CD8-positive, alpha-beta T cell (primary cell): ENCODE measurements at regions of chr16 and their contacts with region 1.

Region 1: GRCh38 chr16:30609926-30610839 is at the start of gene ZNF689:
- DNase-seq: peak; percentile 90 to 98 (median 94)
- ATAC-seq: peak; percentile 88
- H3K4me3 ChIP-seq: peak within 1 kb of the TSS; percentile 69 to 93
- H3K4me3 Mint-ChIP-seq: peak within 1 kb of the TSS; percentile 95
- H3K27ac ChIP-seq: peak within 1 kb of the TSS; percentile 91 to 93
- H3K27ac Mint-ChIP-seq: peak within 1 kb of the TSS; percentile 98
- H3K4me1 ChIP-seq: peaks cover 12% of the 10 kb centered on the region
- H3K4me1 Mint-ChIP-seq: peaks cover 24% of the 10 kb centered on the region
- H3K27me3 ChIP-seq: peaks cover 0 to 2% of the 10 kb centered on the region in 2 experiments
- H3K27me3 Mint-ChIP-seq: no peaks in the 10 kb centered on the region
- CTCF ChIP-seq: no peak
- total RNA-seq, gene ZNF689: 15.6 to 17.5 TPM

Region 2: GRCh38 chr16:30526823-30527635 is 83.2 kb before region 1 on chr16:
- CTCF ChIA-PET with region 1: no interaction called
- POLR2A ChIA-PET with region 1: no interaction called
- intact Hi-C with region 1: loop called in 1 of 2 experiments (anchors 2 kb)
- DNase-seq: peak; percentile 53 to 92 (median 86)
- ATAC-seq: peak; percentile 75
- H3K4me3 ChIP-seq: peak overlapping the region; percentile 74 to 75
- H3K4me3 Mint-ChIP-seq: peak overlapping the region; percentile 87
- H3K27ac ChIP-seq: peak overlapping the region; percentile 59 to 69
- H3K27ac Mint-ChIP-seq: peak overlapping the region; percentile 90
- H3K4me1 ChIP-seq: peaks cover 12% of the 10 kb centered on the region
- H3K4me1 Mint-ChIP-seq: peaks cover 24% of the 10 kb centered on the region
- H3K27me3 ChIP-seq: no peaks in the 10 kb centered on the region
- H3K27me3 Mint-ChIP-seq: no peaks in the 10 kb centered on the region
- CTCF ChIP-seq: no peak

Region 3: GRCh38 chr16:30585400-30586189 is 24.6 kb before region 1 on chr16 and contains the start of gene ZNF785:
- CTCF ChIA-PET with region 1: interaction called, 3 read pairs
- POLR2A ChIA-PET with region 1: interaction called, 5 read pairs
- intact Hi-C with region 1: loop called (anchors 1 kb)
- DNase-seq: peak; percentile 81 to 98 (median 91)
- ATAC-seq: peak; percentile 99
- H3K4me3 ChIP-seq: peak within 1 kb of the TSS; percentile 68 to 78
- H3K4me3 Mint-ChIP-seq: peak within 1 kb of the TSS; percentile 94
- H3K27ac ChIP-seq: peak within 1 kb of the TSS; percentile 44 to 61
- H3K27ac Mint-ChIP-seq: peak within 1 kb of the TSS; percentile 91
- H3K4me1 ChIP-seq: peaks cover 12% of the 10 kb centered on the region
- H3K4me1 Mint-ChIP-seq: peaks cover 27% of the 10 kb centered on the region
- H3K27me3 ChIP-seq: no peaks in the 10 kb centered on the region
- H3K27me3 Mint-ChIP-seq: no peaks in the 10 kb centered on the region
- CTCF ChIP-seq: no peak
- total RNA-seq, gene ZNF785: 5.0 to 6.9 TPM

Region 4: DNA sequence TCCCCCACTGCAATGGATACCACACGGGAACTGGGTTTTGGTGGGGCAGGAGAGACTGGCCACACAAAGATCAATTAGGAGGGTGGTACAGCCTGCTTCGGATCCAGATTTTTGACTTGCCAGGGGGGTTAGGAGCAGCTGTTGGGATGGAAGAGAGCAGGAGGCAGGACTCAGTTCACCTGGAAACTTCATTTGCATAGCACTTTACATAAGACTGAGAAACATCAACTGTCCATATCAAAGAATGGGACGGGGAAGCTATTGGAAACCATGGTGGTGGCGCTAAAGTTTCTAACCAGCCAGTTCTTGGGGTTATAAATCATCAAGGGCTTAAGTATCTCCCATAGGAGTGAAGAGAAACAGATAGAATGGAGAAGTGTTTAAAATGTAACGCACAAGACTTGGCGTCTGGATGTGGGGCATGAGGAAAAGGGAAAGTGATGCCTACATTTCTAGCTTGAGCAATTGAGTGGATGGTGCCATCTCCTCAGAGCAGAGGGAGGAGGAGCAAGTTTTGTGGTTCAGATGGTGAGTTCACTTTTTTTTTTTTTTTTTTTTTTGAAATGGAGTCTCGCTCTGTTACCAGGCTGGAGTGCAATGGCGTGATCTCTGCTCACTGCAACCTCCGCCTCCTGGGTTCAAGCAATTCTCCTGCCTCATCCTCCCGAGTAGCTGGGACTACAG is 82.3 kb after region 1 on chr16:
- CTCF ChIA-PET with region 1: interaction called, 5 read pairs
- POLR2A ChIA-PET with region 1: interaction called, 3 read pairs
- intact Hi-C with region 1: loop called in 1 of 2 experiments (anchors 1 kb)
- DNase-seq: no peak
- ATAC-seq: no peak
- H3K4me3 ChIP-seq: no peak overlapping the region
- H3K4me3 Mint-ChIP-seq: no peak overlapping the region
- H3K27ac ChIP-seq: no peak overlapping the region
- H3K27ac Mint-ChIP-seq: no peak overlapping the region
- H3K4me1 ChIP-seq: peaks cover 7% of the 10 kb centered on the region
- H3K4me1 Mint-ChIP-seq: peaks cover 15% of the 10 kb centered on the region
- H3K27me3 ChIP-seq: no peaks in the 10 kb centered on the region
- H3K27me3 Mint-ChIP-seq: no peaks in the 10 kb centered on the region
- CTCF ChIP-seq: no peak